Tibial artery (tissue), 4 donors: ENCODE measurements at regions of chr17 and their contacts with region 1.

Region 1: GRCh38 chr17:74379495-74380085 is 12.3 kb downstream of the GPR142 start:
- DNase-seq: peak; percentile 93 to 94
- H3K4me3 ChIP-seq: peak overlapping the region; percentile 28 to 34
- H3K27ac ChIP-seq: peak overlapping the region; percentile 72 to 76
- H3K4me1 ChIP-seq: peaks cover 0 to 25% (median 22%) of the 10 kb centered on the region in 4 donors
- H3K27me3 ChIP-seq: no peaks in the 10 kb centered on the region
- CTCF ChIP-seq: peak; percentile 96 to 99

Region 2: GRCh38 chr17:74429604-74430384 is 50.2 kb after region 1 on chr17:
- intact Hi-C with region 1: loop called (anchors 5 kb)
- DNase-seq: no peak
- H3K4me3 ChIP-seq: peak overlapping the region; percentile 84 to 91
- H3K27ac ChIP-seq: peak overlapping the region; percentile 93 to 100
- H3K4me1 ChIP-seq: peaks cover 0 to 66% (median 41%) of the 10 kb centered on the region in 4 donors
- H3K27me3 ChIP-seq: no peaks in the 10 kb centered on the region
- CTCF ChIP-seq: no peak

Region 3: GRCh38 chr17:74457820-74458166 is 78.2 kb after region 1 on chr17:
- intact Hi-C with region 1: loop called (anchors 1 kb)
- DNase-seq: no peak
- H3K4me3 ChIP-seq: no peak overlapping the region
- H3K27ac ChIP-seq: no peak overlapping the region
- H3K4me1 ChIP-seq: peaks cover 0 to 40% (median 32%) of the 10 kb centered on the region in 4 donors
- H3K27me3 ChIP-seq: no peaks in the 10 kb centered on the region
- CTCF ChIP-seq: no peak